ENCODE measurements at regions of chr11 and their contacts with region 1.

Region 1: DNA sequence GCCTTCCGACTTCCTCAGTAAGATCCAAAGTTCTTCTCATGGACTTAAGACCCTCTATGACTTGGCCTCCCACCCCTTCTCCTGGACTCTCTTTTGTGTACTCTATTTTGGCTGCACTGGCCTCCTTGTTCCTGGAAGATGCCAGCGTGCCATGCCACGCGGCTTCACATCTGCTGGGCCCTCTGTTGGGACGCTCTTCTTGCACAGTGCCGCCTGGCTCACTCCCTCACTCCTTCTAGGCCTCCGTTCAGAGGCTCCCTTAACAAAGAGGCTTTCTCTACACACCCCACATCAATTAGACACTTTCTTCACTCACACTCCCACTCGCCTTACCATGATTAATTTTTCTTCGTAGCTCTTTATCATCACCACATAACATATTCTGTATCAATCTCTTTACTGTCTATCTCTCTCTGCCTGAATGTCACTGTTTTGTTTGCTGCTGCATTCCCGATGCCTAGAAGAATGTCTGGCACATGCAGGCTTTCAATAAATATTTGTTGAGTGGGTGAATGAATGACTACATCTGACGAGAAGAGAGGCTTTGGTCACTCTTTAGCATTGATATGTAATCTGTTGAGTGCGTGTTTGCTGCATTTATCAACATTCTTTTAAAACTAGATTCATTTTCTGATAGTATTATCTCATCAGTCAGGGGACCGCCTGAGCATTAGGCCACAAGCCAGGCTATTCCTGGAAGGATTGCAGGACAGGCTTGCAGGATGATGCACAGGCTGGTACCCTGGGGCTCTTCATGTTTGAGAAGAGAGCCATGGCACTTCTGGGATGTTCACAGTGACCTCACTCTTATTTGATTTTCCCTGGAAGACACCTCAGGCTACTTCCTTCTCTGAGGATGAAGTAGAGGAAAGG is 60.6 kb upstream of the AMPD3 start:
- DNase-seq: no peak
- ATAC-seq: no peak
- H3K4me3 ChIP-seq: no peak overlapping the region
- H3K4me3 Mint-ChIP-seq: no peak overlapping the region
- H3K27ac ChIP-seq: no peak overlapping the region
- H3K27ac Mint-ChIP-seq: no peak overlapping the region
- H3K4me1 ChIP-seq: no peaks in the 10 kb centered on the region
- H3K4me1 Mint-ChIP-seq: peaks cover 0 to 5% (median 0%) of the 10 kb centered on the region in 7 donors
- H3K27me3 ChIP-seq: no peaks in the 10 kb centered on the region
- H3K27me3 Mint-ChIP-seq: peaks cover 18 to 27% (median 23%) of the 10 kb centered on the region in 5 donors

Region 2: GRCh38 chr11:10329935-10330334 is 64.5 kb before region 1 on chr11:
- CTCF ChIA-PET with region 1: no interaction called
- POLR2A ChIA-PET with region 1: no interaction called
- intact Hi-C with region 1: loop called in 1 of 2 experiments (anchors 2 kb)
- DNase-seq: no peak
- ATAC-seq: no peak
- H3K4me3 ChIP-seq: no peak overlapping the region
- H3K4me3 Mint-ChIP-seq: no peak overlapping the region
- H3K27ac ChIP-seq: no peak overlapping the region
- H3K27ac Mint-ChIP-seq: no peak overlapping the region
- H3K4me1 ChIP-seq: no peaks in the 10 kb centered on the region
- H3K4me1 Mint-ChIP-seq: no peaks in the 10 kb centered on the region
- H3K27me3 ChIP-seq: no peaks in the 10 kb centered on the region
- H3K27me3 Mint-ChIP-seq: peaks cover 4 to 37% (median 9%) of the 10 kb centered on the region in 5 donors

Region 3: DNA sequence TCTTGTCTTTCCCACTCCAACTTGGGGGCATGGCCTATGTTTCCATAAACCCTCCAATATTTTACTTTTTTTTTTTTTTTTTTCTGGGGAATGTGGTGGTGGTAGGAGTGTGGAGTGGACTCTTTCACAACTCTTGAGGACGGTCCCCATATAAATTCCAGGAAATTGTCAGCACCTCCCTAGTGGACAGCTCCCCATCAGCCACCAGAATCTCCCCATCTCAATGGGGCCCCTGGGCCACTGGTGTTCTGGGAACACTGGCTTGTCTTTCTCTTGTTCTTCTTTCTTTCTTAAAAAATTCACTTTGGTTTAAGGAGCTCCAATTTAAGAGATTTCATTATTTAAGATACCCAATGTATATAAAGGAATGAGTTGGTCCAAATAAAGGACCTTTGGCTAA is 15.4 kb before region 1 on chr11:
- CTCF ChIA-PET with region 1: no interaction called
- POLR2A ChIA-PET with region 1: no interaction called
- intact Hi-C with region 1: no loop called
- DNase-seq: no peak
- ATAC-seq: no peak
- H3K4me3 ChIP-seq: no peak overlapping the region
- H3K4me3 Mint-ChIP-seq: no peak overlapping the region
- H3K27ac ChIP-seq: no peak overlapping the region
- H3K27ac Mint-ChIP-seq: no peak overlapping the region
- H3K4me1 ChIP-seq: no peaks in the 10 kb centered on the region
- H3K4me1 Mint-ChIP-seq: peaks cover 0 to 2% (median 0%) of the 10 kb centered on the region in 7 donors
- H3K27me3 ChIP-seq: no peaks in the 10 kb centered on the region
- H3K27me3 Mint-ChIP-seq: peaks cover 0 to 20% (median 17%) of the 10 kb centered on the region in 5 donors

Region 4: DNA sequence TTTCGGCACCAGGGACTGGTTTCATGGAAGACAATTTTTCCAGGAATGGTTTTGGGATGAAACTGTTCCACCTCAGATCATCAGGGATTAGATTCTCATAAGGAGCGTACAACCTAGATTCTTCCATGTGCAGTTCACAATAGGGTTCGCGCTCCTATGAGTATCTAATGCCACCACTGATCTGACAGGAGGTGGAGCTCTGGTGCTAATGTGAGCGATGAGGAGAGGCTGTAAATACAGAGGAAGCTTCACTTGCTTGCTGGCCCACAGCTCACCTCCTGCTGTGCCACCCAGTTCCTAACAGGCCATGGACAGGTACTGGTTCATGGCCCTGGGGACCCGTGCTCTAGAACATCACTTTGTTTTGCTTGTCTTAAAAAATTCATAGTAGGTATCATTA is 18.8 kb after region 1 on chr11:
- CTCF ChIA-PET with region 1: no interaction called
- POLR2A ChIA-PET with region 1: no interaction called
- intact Hi-C with region 1: no loop called
- DNase-seq: peak in 7 of 9 donors; percentile 35 to 65 (median 57)
- ATAC-seq: peak; percentile 81
- H3K4me3 ChIP-seq: no peak overlapping the region
- H3K4me3 Mint-ChIP-seq: no peak overlapping the region
- H3K27ac ChIP-seq: no peak overlapping the region
- H3K27ac Mint-ChIP-seq: no peak overlapping the region
- H3K4me1 ChIP-seq: peaks cover 12 to 27% of the 10 kb centered on the region in 2 donors
- H3K4me1 Mint-ChIP-seq: peaks cover 29 to 47% (median 39%) of the 10 kb centered on the region in 7 donors
- H3K27me3 ChIP-seq: no peaks in the 10 kb centered on the region
- H3K27me3 Mint-ChIP-seq: peaks cover 0 to 16% (median 0%) of the 10 kb centered on the region in 5 donors